ENCODE measurements at regions of chr17 and their contacts with region 1.

Region 1: DNA sequence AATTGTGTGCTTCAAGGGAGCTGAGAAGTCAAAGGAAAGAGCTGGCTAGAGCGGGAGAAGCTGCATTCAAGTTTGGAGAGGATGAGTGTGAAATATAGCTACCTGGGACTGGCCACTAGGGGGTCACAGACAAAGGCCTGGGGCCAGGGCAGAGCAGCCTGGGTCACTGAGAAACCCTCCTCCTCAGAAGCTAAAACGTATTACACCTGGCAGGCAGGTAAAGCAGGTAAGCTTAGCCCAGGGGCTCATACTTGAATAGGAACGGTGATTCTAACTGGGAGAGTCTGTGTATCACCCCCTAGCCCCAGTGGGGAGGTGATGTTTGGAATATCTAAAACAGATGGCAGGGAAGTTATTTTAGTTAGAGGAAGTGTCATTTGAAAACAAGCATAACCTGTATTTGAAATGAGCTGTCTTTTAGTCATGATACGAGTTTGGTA is 6.8 kb downstream of the KRT37 start:
- DNase-seq: peak; percentile 59
- ATAC-seq: peak; percentile 96
- H3K4me3 Mint-ChIP-seq: no peak overlapping the region
- H3K27ac Mint-ChIP-seq: no peak overlapping the region
- H3K4me1 Mint-ChIP-seq: peaks cover 17% of the 10 kb centered on the region
- H3K27me3 Mint-ChIP-seq: no peaks in the 10 kb centered on the region
- CTCF ChIP-seq: peak; percentile 65

Region 2: GRCh38 chr17:41284043-41284442 is 133.6 kb before region 1 on chr17:
- CTCF ChIA-PET with region 1: no interaction called
- POLR2A ChIA-PET with region 1: no interaction called
- DNase-seq: no peak
- ATAC-seq: no peak
- H3K4me3 Mint-ChIP-seq: no peak overlapping the region
- H3K27ac Mint-ChIP-seq: no peak overlapping the region
- H3K4me1 Mint-ChIP-seq: peaks cover 20% of the 10 kb centered on the region
- H3K27me3 Mint-ChIP-seq: no peaks in the 10 kb centered on the region
- CTCF ChIP-seq: no peak

Region 3: GRCh38 chr17:41329281-41329948 is 88.2 kb before region 1 on chr17:
- CTCF ChIA-PET with region 1: interaction called, 12 read pairs
- POLR2A ChIA-PET with region 1: no interaction called
- DNase-seq: peak; percentile 76
- ATAC-seq: peak; percentile 90
- H3K4me3 Mint-ChIP-seq: no peak overlapping the region
- H3K27ac Mint-ChIP-seq: no peak overlapping the region
- H3K4me1 Mint-ChIP-seq: no peaks in the 10 kb centered on the region
- H3K27me3 Mint-ChIP-seq: no peaks in the 10 kb centered on the region
- CTCF ChIP-seq: peak; percentile 86

Region 4: DNA sequence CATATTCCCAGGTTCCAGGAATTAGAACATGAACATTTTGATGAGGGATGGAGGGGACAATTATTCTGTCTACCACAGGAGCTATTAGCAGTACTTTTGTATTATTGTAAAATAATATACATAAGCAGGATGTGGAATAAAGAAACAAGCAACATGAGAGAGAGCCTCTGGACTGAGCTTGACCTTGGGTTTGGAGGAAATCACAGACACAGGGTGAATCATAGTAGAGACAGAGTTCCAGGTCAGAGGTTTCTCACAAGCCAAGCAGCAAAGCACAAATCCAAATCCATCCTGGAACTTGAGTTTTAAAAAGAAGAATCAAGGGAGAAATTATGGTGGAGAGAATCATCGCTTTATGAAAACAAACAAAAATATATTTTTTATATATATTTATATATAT is 25.3 kb before region 1 on chr17:
- CTCF ChIA-PET with region 1: interaction called, 11 read pairs
- POLR2A ChIA-PET with region 1: no interaction called
- DNase-seq: no peak
- ATAC-seq: no peak
- H3K4me3 Mint-ChIP-seq: no peak overlapping the region
- H3K27ac Mint-ChIP-seq: no peak overlapping the region
- H3K4me1 Mint-ChIP-seq: no peaks in the 10 kb centered on the region
- H3K27me3 Mint-ChIP-seq: no peaks in the 10 kb centered on the region
- CTCF ChIP-seq: no peak

Region 5: DNA sequence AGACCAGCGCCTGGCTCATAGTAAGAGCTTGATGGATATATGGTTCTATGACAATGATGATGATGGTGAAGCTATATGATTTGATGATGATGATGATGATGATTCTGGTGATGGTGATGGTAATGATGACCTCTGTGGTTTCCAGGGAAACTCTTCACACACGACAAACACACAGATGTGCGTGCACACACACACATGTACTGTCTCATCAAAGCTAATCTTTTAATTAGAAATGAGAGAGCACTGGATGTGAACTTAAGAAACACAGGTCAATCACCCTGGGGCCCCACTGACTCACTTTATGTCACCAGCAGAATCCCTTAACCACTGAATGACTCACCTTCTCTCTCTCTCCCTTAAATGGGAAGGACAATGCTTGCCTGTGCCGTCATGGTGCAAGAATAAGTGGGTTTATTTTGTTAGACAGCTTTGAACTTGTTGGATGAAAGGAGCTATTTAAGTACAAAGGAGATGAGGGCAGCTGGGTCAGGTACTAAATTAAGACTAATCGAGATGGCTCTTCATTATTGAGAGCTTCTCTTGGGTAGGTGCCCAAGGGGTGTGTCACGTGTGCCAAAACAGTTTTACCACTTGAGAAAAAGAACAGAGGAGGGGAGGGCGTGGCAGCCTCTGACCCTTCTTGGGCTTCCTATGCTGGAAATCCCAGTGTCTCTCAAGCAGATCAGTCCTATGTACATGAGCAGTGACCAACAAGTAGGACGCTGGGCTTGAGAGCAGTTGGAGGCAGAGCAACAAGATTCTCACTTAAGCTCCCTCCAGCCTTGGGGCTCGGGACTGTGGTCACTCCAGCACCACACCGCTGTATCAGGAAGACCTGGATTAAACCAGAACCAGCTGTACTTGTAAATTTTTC is 13.6 kb before region 1 on chr17:
- CTCF ChIA-PET with region 1: interaction called, 34 read pairs
- POLR2A ChIA-PET with region 1: interaction called, 3 read pairs
- DNase-seq: no peak
- ATAC-seq: no peak
- H3K4me3 Mint-ChIP-seq: no peak overlapping the region
- H3K27ac Mint-ChIP-seq: no peak overlapping the region
- H3K4me1 Mint-ChIP-seq: no peaks in the 10 kb centered on the region
- H3K27me3 Mint-ChIP-seq: no peaks in the 10 kb centered on the region; the same call in none of the 2 replicates
- CTCF ChIP-seq: no peak

Region 6: DNA sequence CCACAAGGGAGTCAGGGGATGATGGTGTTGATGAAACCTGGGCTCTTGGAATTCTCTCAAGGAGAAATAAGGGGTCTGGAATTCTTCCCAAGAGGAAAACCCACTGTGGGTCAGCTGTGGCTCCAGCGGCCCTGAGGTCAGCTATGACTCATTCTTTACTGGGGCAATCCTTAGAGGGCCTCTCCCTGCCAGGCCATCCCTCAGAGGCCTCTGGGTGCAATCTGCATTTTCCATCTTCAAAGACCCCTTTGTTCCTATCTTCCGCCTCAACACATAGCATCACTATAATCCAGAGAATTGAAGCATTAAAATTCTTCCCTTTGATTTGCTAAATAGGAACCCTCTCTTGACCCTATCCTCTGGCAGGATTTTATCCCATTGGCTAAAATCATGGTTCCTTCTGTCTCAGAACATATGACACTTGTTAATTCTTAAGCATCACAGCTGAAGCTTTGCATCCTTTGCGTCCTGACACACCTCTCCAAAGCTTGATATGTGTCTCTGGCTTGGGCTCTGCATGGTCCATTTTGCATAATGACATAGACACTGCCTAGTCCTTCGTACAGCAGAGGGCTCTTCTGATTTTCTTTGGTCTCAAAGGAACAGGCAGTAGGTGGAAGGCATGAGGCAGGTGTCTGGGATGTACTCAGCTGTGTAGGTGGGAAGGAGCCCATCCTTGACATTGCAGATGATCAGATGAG is 11.1 kb after region 1 on chr17:
- CTCF ChIA-PET with region 1: interaction called, 22 read pairs
- POLR2A ChIA-PET with region 1: no interaction called
- DNase-seq: no peak
- ATAC-seq: no peak
- H3K4me3 Mint-ChIP-seq: no peak overlapping the region
- H3K27ac Mint-ChIP-seq: no peak overlapping the region
- H3K4me1 Mint-ChIP-seq: peaks cover 7% of the 10 kb centered on the region
- H3K27me3 Mint-ChIP-seq: no peaks in the 10 kb centered on the region; the same call in 1 of the 2 replicates
- CTCF ChIP-seq: no peak

Region 7: GRCh38 chr17:41434415-41434814 is 16.8 kb after region 1 on chr17:
- CTCF ChIA-PET with region 1: interaction called, 22 read pairs
- POLR2A ChIA-PET with region 1: no interaction called
- DNase-seq: no peak
- ATAC-seq: no peak
- H3K4me3 Mint-ChIP-seq: no peak overlapping the region
- H3K27ac Mint-ChIP-seq: no peak overlapping the region
- H3K4me1 Mint-ChIP-seq: no peaks in the 10 kb centered on the region
- H3K27me3 Mint-ChIP-seq: no peaks in the 10 kb centered on the region
- CTCF ChIP-seq: no peak

Region 8: DNA sequence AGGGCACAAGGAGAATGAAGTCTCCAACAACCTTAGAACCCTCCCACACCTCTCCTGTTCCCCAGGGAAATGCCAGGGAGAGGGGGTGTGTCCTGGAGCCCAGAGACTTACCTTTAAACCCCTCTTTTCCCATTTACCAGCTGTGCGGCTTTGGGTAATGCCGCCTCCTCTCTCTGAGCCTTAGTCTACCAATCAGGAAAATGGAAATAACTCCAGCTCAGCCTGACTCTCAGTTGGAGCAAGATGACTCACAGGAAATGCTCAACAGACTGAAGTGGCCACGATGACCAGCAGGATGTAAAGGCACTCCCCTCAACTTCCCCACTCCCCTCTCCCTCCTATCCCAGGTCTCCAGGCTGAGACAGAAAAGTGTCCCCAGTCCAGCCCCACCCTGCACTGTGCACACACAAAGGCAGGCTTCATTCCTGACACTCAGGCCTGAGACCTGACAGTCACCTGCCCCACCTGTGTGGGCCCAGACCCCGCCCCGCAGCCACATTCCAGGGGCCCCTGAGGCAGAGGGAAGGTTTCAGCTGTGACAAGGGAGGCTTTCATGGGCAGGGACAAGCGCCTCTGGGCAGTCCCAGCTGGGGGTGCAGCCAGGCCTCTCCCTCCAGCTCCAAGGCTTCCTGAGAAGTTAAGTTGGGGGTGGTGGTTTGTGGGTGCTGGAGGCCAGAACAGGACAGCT is 104.1 kb after region 1 on chr17:
- CTCF ChIA-PET with region 1: interaction called, 11 read pairs
- POLR2A ChIA-PET with region 1: no interaction called
- DNase-seq: peak; percentile 57
- ATAC-seq: peak; percentile 46
- H3K4me3 Mint-ChIP-seq: no peak overlapping the region
- H3K27ac Mint-ChIP-seq: peak overlapping the region; percentile 48; the same call in 1 of the 2 replicates
- H3K4me1 Mint-ChIP-seq: peaks cover 25% of the 10 kb centered on the region
- H3K27me3 Mint-ChIP-seq: no peaks in the 10 kb centered on the region; the same call in 1 of the 2 replicates
- CTCF ChIP-seq: no peak